ENCODE measurements at regions of chr2 and their contacts with region 1.

Region 1: DNA sequence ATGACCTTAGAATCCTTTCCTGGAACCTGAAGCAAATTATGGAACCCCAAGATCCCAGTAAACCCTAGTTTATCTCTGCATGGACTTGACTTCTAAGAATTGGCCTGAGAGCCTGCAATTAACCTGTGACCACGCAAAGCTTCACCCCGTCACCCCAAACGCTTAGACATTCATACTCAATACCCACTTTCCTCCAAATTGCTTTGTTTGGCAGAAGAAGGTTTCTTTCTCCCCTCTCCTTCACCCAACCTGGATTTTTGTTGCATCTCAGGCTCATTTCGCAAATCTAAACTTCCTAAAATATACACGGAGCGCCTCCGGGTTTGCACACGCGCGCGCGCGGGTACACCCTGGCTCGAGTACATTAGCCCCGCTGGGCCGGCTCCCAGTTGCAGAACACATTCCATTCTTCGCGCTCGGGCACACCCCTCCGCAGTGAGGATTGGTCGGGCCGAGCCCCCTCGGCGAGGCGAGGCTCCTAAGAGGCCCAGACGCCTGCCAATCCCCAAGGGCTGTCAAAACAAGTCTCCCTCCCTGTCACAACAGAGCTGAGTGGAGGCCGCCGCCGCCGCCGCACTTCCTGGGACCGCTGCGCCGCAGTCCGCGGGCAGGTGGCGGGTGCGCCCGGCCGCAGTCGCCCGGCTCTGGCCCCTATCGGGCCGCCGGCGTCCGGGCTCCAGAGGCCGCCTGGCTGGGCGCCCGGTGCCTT is at the start of gene PLCL1:
- DNase-seq: peak; percentile 78 to 98 (median 98)
- H3K4me3 ChIP-seq: peak within 1 kb of the TSS; percentile 66 to 98 (median 84)
- H3K27ac ChIP-seq: peak within 1 kb of the TSS; percentile 23 to 93 (median 87)
- H3K27me3 ChIP-seq: no peaks in the 10 kb centered on the region
- CTCF ChIP-seq: peak in 35 of 56 donors; percentile 5 to 56 (median 30)
- total RNA-seq, gene PLCL1: 25.2 to 120 (median 49.4) TPM

Region 2: DNA sequence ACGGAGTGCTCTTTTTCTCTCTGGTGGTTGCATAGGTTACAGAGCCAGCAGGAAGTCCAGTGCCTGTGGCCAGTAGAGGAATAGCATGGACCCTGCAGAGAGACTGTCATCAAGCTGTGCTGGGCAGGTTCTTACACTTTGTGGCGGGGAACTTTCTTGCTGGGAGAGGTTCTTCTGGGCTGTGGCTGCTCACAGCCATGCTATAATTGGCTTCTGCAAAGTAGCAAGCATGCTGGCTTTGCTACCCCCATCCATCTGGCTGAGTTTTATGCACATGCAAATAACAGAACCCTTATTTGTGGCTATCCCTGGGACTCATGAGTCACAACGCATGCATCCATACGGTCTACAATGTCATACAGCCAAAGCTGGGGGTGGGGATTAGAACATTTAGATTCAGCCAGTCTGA is 69.1 kb after region 1 on chr2:
- intact Hi-C with region 1: loop called in 1 of 2 experiments (anchors 10 kb)
- DNase-seq: peak in 8 of 10 donors; percentile 13 to 64 (median 52)
- H3K4me3 ChIP-seq: peak overlapping the region in 6 of 59 donors; percentile 3 to 25 (median 14)
- H3K27ac ChIP-seq: peak overlapping the region in 46 of 59 donors; percentile 0 to 77 (median 47)
- H3K27me3 ChIP-seq: no peaks in the 10 kb centered on the region
- CTCF ChIP-seq: peak in 6 of 56 donors; percentile 9 to 30 (median 18)

Region 3: DNA sequence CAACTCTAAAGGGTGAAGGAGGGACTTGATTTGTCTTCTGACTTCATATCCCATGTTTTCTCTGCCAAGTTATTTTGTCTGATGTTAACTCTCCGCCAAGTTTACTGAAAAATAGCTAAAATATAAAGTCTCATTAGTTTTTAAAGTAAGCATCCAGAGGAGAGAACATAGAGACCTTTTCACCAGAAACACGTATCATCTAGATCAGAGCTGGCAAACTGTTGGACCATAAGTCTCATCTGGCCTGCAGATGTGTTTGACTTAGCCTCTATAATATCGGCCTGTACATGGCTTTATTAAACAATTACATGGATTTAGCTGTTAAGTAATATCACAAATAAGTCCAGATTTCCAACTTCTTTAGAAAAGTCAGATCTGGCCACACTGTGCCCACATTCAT is 182.8 kb after region 1 on chr2:
- intact Hi-C with region 1: loop called in 1 of 2 experiments (anchors 10 kb)
- DNase-seq: no peak
- H3K4me3 ChIP-seq: no peak overlapping the region
- H3K27ac ChIP-seq: no peak overlapping the region
- H3K27me3 ChIP-seq: no peaks in the 10 kb centered on the region
- CTCF ChIP-seq: no peak

Region 4: DNA sequence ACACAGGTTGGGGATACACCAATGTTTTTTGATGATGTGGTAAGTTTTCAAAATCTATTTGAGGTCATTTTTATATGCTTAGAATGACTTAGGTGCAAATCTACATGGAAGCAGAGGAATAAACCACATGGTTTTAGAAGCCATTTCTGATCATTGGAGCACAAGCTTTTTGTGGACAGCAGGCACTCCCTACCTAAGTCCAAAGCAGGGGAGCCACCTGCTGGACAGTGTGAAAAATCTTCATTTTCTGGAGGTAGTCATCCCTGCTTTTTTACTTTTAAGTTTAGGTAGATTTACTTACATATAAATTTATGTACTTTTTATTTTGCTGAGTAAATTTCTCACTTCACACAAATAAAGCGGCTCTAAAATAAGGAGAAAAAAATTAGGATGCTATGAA is 323.4 kb after region 1 on chr2:
- intact Hi-C with region 1: loop called (anchors 5 kb)
- DNase-seq: peak in 1 of 10 donors; percentile 43
- H3K4me3 ChIP-seq: no peak overlapping the region
- H3K27ac ChIP-seq: no peak overlapping the region
- H3K27me3 ChIP-seq: no peaks in the 10 kb centered on the region
- CTCF ChIP-seq: peak; percentile 28 to 79 (median 60)

Region 5: GRCh38 chr2:198283146-198283545 is 478.9 kb after region 1 on chr2:
- intact Hi-C with region 1: no loop called
- DNase-seq: no peak
- H3K4me3 ChIP-seq: no peak overlapping the region
- H3K27ac ChIP-seq: no peak overlapping the region
- H3K27me3 ChIP-seq: peaks cover 0 to 5% (median 0%) of the 10 kb centered on the region in 45 donors
- CTCF ChIP-seq: no peak

Measured in dorsolateral prefrontal cortex (tissue), 120 donors.